PC-3 (cell line): ENCODE measurements at regions of chr3 and their contacts with region 1.

Region 1: GRCh38 chr3:113745273-113746068 is 578 bp downstream of the NAA50 start:
- DNase-seq: peak; percentile 93
- ATAC-seq: peak; percentile 64
- H3K4me3 ChIP-seq: peak overlapping the region; percentile 96
- H3K27ac ChIP-seq: peak overlapping the region; percentile 89
- H3K4me1 ChIP-seq: peaks cover 47% of the 10 kb centered on the region
- H3K27me3 ChIP-seq: no peaks in the 10 kb centered on the region
- CTCF ChIP-seq: peak; percentile 72

Region 2: DNA sequence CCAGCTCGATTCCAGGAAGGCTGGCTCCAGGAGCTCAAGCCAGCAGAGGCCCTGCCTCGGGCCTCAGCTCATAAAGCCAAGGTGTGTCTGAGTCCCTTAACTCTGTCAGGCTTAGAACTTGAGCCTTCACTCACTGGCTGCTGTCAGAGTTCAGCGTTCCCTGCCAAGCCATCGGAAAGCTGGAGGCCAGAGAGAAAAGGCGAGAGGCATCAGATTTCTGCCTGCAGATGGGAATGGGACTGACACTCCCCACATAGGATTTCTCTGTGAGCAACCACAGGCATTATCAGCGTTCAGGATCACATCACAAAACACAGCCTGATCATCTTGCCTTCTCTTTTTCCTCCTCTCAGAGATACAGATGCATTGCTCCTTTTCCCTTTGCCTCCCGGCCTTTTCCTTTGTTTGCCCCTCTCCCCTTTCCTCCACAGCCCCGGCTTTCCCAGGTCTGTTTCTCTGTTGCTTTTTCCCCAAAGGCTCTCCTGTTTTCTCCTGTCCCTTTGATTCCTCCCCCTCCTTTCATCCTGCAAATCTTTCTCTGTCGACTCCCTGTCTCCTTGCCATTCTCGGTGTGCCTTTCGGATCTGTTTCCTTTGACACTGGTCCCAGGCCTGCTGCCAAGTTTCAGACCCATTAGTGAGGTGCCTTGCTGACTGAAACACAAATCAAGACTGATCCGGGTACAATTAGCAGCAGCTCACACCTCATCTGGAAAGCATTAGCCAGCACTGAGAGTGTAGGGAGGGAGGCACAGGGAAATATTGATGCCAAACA is 578.6 kb before region 1 on chr3:
- CTCF ChIA-PET with region 1: no interaction called
- POLR2A ChIA-PET with region 1: no interaction called
- intact Hi-C with region 1: no loop called
- DNase-seq: peak; percentile 48
- ATAC-seq: peak; percentile 79
- H3K4me3 ChIP-seq: no peak overlapping the region
- H3K27ac ChIP-seq: no peak overlapping the region
- H3K4me1 ChIP-seq: no peaks in the 10 kb centered on the region
- H3K27me3 ChIP-seq: no peaks in the 10 kb centered on the region
- CTCF ChIP-seq: no peak

Region 3: GRCh38 chr3:113552851-113553250 is 192.6 kb before region 1 on chr3:
- CTCF ChIA-PET with region 1: no interaction called
- POLR2A ChIA-PET with region 1: no interaction called
- intact Hi-C with region 1: loop called (anchors 10 kb)
- DNase-seq: peak; percentile 26
- ATAC-seq: no peak
- H3K4me3 ChIP-seq: no peak overlapping the region
- H3K27ac ChIP-seq: peak overlapping the region; percentile 96
- H3K4me1 ChIP-seq: peaks cover 63% of the 10 kb centered on the region
- H3K27me3 ChIP-seq: no peaks in the 10 kb centered on the region
- CTCF ChIP-seq: peak; percentile 41

Region 4: DNA sequence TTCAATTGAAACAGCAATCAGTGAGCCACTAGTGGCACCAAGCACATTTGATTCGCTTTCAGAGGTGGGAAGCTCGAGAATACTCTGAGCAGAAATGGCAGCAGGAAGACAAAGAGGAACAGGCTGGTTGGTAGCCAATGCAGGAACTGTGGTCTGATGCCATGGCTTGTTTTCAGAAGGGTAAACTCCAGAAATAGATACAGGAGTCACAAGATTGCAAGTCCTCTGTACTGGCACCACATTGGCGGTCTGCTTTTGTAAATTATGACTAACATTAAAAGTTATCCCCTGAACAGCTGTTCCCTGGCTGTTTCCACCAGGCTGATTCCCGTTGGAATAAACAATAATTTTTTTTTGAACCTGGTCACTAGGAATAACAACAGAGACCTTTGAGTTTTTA is 84.6 kb before region 1 on chr3:
- CTCF ChIA-PET with region 1: no interaction called
- POLR2A ChIA-PET with region 1: no interaction called
- intact Hi-C with region 1: no loop called
- DNase-seq: no peak
- ATAC-seq: no peak
- H3K4me3 ChIP-seq: no peak overlapping the region
- H3K27ac ChIP-seq: no peak overlapping the region
- H3K4me1 ChIP-seq: no peaks in the 10 kb centered on the region
- H3K27me3 ChIP-seq: no peaks in the 10 kb centered on the region
- CTCF ChIP-seq: no peak

Region 5: DNA sequence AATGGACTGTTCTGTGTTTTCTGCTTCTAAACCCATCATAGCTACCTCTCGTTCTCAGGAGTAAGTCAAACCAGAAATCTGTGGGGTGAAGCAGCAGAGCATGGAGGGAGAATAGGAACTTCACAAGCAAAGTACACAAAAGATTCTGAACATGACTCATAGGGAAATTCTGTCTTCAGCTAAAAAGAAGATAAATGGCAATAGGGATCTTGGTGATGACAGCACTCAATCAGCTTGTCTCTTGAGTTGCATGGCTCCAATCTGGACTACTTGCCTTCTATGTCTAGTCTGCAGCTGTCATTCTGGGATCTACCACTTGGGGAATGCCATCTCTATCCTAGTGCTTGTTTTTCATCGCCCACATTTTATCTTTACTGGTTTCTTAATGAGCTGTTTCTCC is 79.6 kb after region 1 on chr3:
- CTCF ChIA-PET with region 1: interaction called, 10 read pairs
- POLR2A ChIA-PET with region 1: no interaction called
- intact Hi-C with region 1: no loop called
- DNase-seq: peak; percentile 44
- ATAC-seq: peak; percentile 62
- H3K4me3 ChIP-seq: no peak overlapping the region
- H3K27ac ChIP-seq: no peak overlapping the region
- H3K4me1 ChIP-seq: peaks cover 20% of the 10 kb centered on the region
- H3K27me3 ChIP-seq: no peaks in the 10 kb centered on the region
- CTCF ChIP-seq: peak; percentile 29; the same call in 1 of the 2 replicates

Region 6: GRCh38 chr3:114056130-114057010 is 310.9 kb after region 1 on chr3 and contains the starts of genes CCDC191 and QTRT2:
- CTCF ChIA-PET with region 1: no interaction called
- POLR2A ChIA-PET with region 1: no interaction called
- intact Hi-C with region 1: loop called (anchors 5 kb)
- DNase-seq: peak; percentile 99
- ATAC-seq: peak; percentile 98
- H3K4me3 ChIP-seq: peak within 1 kb of the TSS; percentile 76
- H3K27ac ChIP-seq: peak within 1 kb of the TSS; percentile 71
- H3K4me1 ChIP-seq: peaks cover 21% of the 10 kb centered on the region
- H3K27me3 ChIP-seq: no peaks in the 10 kb centered on the region
- CTCF ChIP-seq: no peak
- total RNA-seq, gene CCDC191: 1.3 and 1.7 TPM in 2 replicates
- total RNA-seq, gene QTRT2: 35.0 and 38.0 TPM in 2 replicates

Region 7: DNA sequence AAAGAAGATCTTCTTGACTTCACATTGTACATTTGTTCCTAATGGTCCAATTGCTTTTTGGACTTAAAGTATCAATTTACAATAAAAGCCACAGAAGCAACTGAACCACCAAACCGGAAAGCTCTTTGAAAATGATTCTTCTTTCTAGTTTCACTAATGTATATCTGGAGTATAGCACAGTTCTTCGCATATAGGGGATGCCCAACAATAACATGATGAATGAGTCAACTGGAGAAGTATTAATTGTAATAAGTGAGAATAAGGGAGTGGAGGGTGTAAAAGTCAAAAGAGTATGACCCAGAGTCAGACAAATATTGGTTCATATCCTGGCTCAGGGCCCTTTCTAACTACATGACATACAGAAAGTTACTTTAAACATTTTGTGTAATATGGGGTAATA is 976.4 kb after region 1 on chr3:
- CTCF ChIA-PET with region 1: no interaction called
- POLR2A ChIA-PET with region 1: interaction called, 16 read pairs
- intact Hi-C with region 1: no loop called
- DNase-seq: no peak
- ATAC-seq: no peak
- H3K4me3 ChIP-seq: no peak overlapping the region
- H3K27ac ChIP-seq: no peak overlapping the region
- H3K4me1 ChIP-seq: no peaks in the 10 kb centered on the region
- H3K27me3 ChIP-seq: no peaks in the 10 kb centered on the region
- CTCF ChIP-seq: no peak